Panc1 (cell line): ENCODE measurements at regions of chr15 and their contacts with region 1.

Region 1: DNA sequence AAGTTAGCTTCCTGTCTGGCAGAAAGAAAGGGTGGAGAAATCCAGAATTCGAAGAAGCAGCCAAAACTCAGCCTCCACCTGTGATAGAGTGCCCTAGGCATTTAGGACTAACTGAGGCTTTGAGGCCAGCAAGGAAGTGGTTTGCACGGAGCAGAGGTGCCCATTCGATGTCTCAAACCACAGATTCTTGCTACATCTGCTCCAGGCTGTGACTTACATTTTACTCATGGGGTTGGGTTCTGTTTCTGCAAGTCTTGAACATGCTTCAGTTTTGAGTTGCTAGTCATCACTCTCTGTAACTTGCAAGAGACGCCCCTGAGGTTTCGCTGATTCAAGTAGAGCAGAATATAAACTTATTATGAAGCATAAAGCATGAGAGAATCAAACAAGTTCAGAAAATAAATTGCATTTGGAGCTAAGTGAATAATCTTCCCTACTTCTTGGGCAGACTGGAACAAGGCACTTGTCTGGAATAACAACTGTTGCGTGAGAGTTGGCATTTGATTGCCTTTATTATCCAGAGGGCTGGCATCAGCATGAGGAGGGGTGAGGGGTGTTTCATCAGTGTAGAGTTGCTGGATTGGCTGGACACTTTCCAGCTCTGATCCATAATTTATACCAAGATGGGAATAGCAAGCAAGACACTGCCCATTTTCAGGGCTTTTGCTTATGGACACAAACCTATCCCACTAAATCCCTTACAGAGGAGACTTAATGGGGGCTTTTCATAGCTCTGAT is 256.5 kb downstream of the AGBL1 start:
- DNase-seq: no peak
- ATAC-seq: no peak
- H3K4me3 ChIP-seq: no peak overlapping the region
- H3K27ac ChIP-seq: no peak overlapping the region
- H3K4me1 ChIP-seq: no peaks in the 10 kb centered on the region
- H3K27me3 ChIP-seq: no peaks in the 10 kb centered on the region
- CTCF ChIP-seq: no peak

Region 2: GRCh38 chr15:86316726-86317383 is 19.4 kb before region 1 on chr15:
- CTCF ChIA-PET with region 1: no interaction called
- POLR2A ChIA-PET with region 1: interaction called, 10 read pairs
- in situ Hi-C with region 1: no loop called
- intact Hi-C with region 1: no loop called
- DNase-seq: no peak
- ATAC-seq: no peak
- H3K4me3 ChIP-seq: no peak overlapping the region
- H3K27ac ChIP-seq: no peak overlapping the region
- H3K4me1 ChIP-seq: no peaks in the 10 kb centered on the region
- H3K27me3 ChIP-seq: no peaks in the 10 kb centered on the region
- CTCF ChIP-seq: no peak